Left ventricle myocardium superior (tissue), 1 donor: ENCODE measurements at regions of chr17 and their contacts with region 1.

Region 1: DNA sequence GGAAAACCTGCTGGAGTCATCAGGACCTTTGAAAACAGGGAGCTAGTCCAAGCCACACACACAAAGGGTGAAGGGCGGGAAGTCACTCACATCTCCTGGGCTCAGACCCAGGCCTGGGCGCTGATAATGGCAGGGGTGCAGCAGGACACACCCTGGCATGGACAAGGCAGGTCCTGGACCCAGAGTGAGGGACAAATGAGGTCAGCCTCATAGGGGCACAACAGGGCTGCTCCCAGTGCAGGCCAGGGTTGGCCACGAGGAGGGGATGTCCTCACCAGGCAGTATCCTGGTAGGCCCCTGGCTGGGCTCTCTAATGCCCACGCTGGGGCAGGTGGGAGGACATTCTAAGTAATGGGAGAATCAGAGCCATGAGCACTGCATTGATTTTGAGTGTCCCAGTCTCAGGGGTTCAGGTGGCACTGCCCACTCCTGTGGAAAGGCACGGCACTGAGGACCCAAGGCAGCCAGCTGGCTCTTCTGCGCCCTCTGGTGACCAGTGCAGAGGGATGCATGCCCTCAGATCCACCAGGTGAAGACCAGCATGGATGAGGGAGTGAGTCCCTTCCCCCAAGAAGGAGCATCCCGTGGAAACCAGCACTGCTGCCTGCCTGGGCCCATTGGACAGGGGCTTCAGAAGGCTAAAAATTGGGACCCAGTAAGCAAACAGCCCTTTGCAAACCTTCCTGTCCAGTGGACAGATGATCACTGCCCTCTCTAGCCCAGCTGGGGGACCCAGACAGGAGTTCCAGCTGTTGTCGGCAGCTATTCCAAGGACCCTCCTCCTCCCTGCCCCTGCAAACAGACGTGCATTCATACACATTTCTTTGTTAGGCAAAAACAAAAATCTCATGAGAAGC is 23.4 kb upstream of the SREBF1 start:
- DNase-seq: peak; percentile 85
- ATAC-seq: peak; percentile 97

Region 2: DNA sequence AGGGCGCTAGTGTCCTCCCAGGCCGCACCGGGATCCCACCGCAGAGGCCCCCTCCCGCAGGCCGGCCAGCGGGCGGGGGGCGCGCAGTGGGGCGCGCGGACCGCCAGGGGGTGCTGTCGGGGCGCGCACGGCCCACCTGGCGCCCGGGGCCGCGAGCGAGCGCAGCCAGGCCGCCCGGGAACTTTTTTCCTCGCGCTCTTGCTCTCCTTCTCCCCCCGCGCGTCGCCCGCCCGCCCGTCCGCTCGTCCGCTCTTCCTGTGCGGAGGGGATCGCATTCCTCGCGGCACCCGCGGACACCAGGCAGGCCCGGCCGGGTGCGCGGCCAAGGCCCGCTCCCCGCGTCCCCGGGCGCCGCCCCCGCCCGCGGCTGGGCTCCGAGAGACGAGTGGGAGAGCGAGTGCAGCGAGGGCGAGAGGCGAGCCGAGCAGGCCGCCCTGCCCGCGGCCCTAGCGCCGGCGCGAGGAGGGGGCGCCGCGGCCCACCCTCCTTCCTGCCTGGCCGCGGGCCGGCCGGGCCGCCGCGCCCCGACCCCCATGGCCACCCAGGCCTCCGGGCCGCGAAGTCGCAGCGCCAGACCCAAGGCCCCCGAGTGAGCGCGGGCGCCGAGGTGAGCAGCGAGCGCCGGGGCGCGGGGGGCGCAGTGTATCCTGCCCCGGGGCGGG is 178.8 kb before region 1 on chr17 and contains the start of gene RAI1:
- intact Hi-C with region 1: loop called (anchors 10 kb)
- DNase-seq: peak; percentile 90
- ATAC-seq: peak; percentile 64
- total RNA-seq, gene RAI1: 30.1 TPM

Region 3: GRCh38 chr17:17812211-17813057 is 47.7 kb before region 1 on chr17:
- intact Hi-C with region 1: loop called (anchors 5 kb)
- DNase-seq: peak; percentile 88
- ATAC-seq: peak; percentile 37